ENCODE measurements at regions of chr12 and their contacts with region 1.

Region 1: DNA sequence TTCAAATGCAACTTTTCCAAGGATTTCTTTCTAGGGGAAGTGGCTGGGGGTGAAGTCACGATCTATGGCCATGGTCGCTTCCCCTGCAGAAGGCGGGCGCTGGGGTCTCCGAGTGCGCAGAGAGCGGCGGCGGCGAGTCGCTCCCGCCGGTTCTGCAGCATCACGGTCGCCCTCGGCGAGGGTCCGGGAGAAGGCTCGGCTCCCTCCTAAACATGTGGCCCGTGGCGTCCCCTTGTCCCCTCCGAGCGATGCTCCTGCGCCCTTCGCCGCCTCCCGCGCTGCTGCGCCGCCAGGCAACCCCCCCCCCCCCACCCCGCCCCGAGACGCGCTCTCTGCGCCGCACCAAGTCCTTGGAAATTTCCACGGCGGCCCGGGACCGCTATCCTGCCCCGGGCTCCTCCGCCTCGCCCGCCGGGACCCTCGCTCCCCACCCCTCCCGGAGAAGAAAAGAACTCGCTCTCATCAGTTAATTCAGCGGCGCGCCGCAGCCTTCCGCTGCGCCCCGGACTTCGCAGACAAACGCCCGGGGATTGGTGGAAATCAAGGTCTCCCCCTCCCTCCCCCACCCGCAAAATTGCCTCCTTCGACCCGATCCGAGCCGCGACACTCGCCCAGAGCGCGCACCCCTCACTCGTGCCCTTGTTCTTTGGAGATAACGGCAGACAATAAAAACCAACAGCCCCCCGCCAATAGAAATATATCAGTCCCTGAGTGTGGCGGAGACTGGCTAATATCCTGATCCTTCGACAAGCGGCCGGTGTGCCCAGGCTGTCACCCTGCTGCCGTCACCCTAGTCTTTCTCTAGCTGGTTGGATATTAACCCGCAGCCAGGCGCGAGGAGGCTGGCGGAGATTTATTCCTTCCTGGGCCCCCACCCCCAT is at the start of gene ST8SIA1:
- DNase-seq: peak; percentile 11
- H3K4me3 Mint-ChIP-seq: peak within 1 kb of the TSS; percentile 91
- H3K27ac Mint-ChIP-seq: peak within 1 kb of the TSS; percentile 56
- H3K4me1 Mint-ChIP-seq: peaks cover 27% of the 10 kb centered on the region
- H3K27me3 Mint-ChIP-seq: peaks cover 52% of the 10 kb centered on the region
- total RNA-seq, gene ST8SIA1: 0.17 and 0.57 TPM in 2 replicates

Region 2: DNA sequence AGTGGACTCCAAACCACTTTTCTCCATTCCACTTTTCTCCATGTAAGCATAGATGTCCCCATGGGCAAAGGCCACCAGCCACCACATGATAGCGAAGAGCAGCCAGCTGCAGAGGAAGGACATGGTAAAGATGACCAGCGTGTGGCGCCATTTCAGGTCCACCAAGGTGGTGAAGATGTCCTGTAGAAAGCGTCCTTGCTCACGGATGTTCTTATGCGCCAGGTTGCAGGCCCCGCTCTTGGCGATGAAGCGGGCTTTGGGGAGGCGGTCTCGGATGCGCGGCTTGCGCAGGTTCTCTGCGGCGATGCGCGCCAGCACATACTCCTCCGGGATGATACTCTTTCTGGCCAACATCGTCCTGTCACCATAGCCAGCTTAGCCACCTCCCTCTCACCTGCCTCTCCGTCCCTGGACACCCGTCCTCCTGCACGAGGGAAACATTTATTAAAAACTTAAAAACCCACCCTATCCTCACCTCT is 561.3 kb before region 1 on chr12:
- intact Hi-C with region 1: loop called (anchors 10 kb)
- DNase-seq: no peak
- H3K4me3 Mint-ChIP-seq: no peak overlapping the region
- H3K27ac Mint-ChIP-seq: no peak overlapping the region
- H3K4me1 Mint-ChIP-seq: no peaks in the 10 kb centered on the region
- H3K27me3 Mint-ChIP-seq: peaks cover 40% of the 10 kb centered on the region

Region 3: GRCh38 chr12:22083167-22083566 is 251.5 kb before region 1 on chr12:
- intact Hi-C with region 1: loop called (anchors 1 kb)
- DNase-seq: no peak
- H3K4me3 Mint-ChIP-seq: no peak overlapping the region
- H3K27ac Mint-ChIP-seq: no peak overlapping the region
- H3K4me1 Mint-ChIP-seq: no peaks in the 10 kb centered on the region
- H3K27me3 Mint-ChIP-seq: peaks cover 12% of the 10 kb centered on the region

Region 4: DNA sequence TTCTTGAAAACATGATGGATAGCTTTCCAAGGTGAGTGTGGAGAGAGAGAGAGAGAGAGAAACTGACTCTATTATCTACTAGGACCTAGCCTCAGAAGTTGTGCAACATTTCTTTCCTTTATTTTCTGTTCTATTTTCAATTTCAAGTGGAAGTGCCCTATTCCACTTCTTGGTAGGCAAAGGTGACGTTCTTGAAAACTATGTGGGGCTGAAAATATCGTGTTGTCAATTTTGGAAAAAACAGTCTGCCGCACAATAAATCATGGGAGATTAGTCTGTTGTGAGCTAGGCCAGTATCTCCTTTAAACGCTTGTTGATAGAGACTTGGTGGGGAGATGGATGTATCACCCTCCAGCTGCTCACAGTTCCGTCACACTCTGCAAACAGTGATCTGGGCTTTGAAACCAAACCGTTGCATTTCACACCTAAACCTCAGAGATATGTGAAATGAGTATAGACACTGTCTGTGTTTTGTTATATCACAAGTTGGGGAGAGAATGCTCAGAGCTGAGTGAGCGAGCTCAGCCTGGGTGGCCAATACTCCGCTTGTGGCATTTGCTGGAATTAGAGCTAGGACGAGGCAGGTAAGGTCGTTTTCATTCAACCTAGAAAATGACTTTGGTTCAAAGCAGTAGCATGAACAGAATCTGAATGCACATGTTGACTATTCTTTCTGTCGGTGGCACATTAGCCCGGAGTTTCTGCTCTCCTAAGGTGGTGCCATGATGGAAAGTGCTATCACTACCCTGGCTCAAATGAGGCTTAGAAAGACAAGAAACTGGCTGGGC is 74.9 kb after region 1 on chr12:
- intact Hi-C with region 1: loop called (anchors 2 kb)
- DNase-seq: peak; percentile 52
- H3K4me3 Mint-ChIP-seq: peak overlapping the region; percentile 6
- H3K27ac Mint-ChIP-seq: peak overlapping the region; percentile 54
- H3K4me1 Mint-ChIP-seq: peaks cover 31% of the 10 kb centered on the region
- H3K27me3 Mint-ChIP-seq: no peaks in the 10 kb centered on the region

Region 5: GRCh38 chr12:22544038-22544979 is 209.7 kb after region 1 on chr12 and contains the start of gene C2CD5:
- intact Hi-C with region 1: loop called (anchors 10 kb)
- DNase-seq: peak; percentile 92
- H3K4me3 Mint-ChIP-seq: peak within 1 kb of the TSS; percentile 94
- H3K27ac Mint-ChIP-seq: peak within 1 kb of the TSS; percentile 96
- H3K4me1 Mint-ChIP-seq: peaks cover 35% of the 10 kb centered on the region
- H3K27me3 Mint-ChIP-seq: peaks cover 14% of the 10 kb centered on the region
- total RNA-seq, gene C2CD5: 30.0 and 35.5 TPM in 2 replicates

Region 6: DNA sequence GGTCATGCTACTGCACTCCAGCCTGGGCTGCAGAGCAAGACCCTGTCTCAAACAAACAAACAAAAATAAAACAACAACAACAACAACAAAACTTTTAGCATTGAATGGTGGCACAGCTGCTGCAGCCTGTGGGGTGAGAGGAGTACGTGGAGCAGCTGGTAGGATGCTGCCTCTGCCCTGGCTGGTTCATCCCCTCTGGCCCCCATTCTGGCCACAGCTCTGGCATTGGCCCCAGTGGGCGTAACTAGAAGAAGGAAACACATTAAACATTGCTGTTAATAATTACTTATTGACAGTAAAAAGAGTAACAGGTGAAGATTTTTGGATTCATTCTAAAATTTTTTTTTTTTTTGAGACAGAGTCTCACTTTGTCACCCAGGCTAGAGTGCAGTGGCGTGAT is 238.5 kb after region 1 on chr12:
- intact Hi-C with region 1: no loop called
- DNase-seq: no peak
- H3K4me3 Mint-ChIP-seq: no peak overlapping the region
- H3K27ac Mint-ChIP-seq: no peak overlapping the region
- H3K4me1 Mint-ChIP-seq: no peaks in the 10 kb centered on the region
- H3K27me3 Mint-ChIP-seq: no peaks in the 10 kb centered on the region

Measured in activated T-helper 1 cell treated with anti-CD3 and anti-CD28 coated beads, Interleukin-12 subunit alpha, Interleukin-12 subunit beta, Interleukin-2, Interleukin-4 antibody, amounts not matched to agents 30 ng/mL and 10 ng/mL and 1 ng/mL, durations not matched to agents 14 hours and 24 hours and 36 hours (primary cell).